CD8-positive, alpha-beta memory T cell (primary cell): ENCODE measurements at regions of chr19 and their contacts with region 1.

Region 1: DNA sequence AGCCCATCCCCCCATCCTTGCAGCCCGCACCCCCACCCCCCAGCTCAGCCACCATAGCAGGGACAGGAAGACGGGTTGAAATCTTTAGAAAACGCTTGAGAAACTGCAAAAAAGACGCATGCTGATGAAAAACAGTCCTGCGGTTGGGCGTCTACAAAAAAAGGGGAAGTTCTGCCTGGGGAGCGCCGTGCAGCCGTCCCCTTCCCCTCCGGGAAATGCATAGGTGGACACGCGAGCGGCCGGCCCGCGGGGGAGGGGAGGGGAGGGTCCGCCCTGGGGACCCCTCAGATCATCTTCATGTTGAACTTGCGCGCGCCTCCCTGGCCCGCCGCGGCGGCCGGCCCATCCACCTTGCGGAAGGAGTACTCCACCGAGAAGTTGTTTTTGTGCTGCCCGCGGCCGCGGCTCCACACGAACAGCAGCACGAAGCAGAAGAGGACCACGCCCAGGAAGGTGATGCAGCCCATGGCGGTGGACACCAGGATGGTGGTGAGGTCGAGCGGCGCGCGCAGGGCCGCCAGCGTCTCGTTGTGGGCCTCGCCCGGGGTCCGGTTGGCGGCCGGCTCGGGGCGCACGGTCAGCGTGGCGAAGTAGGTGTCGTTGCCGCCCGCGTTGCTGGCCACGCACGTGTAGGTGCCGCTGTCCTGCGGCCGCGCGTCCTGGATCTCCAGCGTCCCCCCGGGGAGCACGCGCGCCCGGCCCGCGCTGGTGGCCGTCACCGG is 7.9 kb upstream of the PEAK3 start:
- DNase-seq: peak in 3 of 5 donors; percentile 59 to 79 (median 68)
- H3K4me3 ChIP-seq: peak overlapping the region; percentile 81
- H3K4me3 Mint-ChIP-seq: peak overlapping the region; percentile 86 to 95 (median 89)
- H3K27ac ChIP-seq: peak overlapping the region; percentile 36
- H3K27ac Mint-ChIP-seq: peak overlapping the region in 6 of 8 donors; percentile 58 to 83 (median 73)
- H3K4me1 ChIP-seq: peaks cover 18% of the 10 kb centered on the region
- H3K4me1 Mint-ChIP-seq: peaks cover 16 to 41% (median 21%) of the 10 kb centered on the region in 3 donors
- H3K27me3 ChIP-seq: no peaks in the 10 kb centered on the region
- H3K27me3 Mint-ChIP-seq: peaks cover 0 to 12% of the 10 kb centered on the region in 2 donors

Region 2: GRCh38 chr19:2274931-2275535 is 14.8 kb before region 1 on chr19:
- CTCF ChIA-PET with region 1: interaction called, 33 read pairs
- POLR2A ChIA-PET with region 1: interaction called, 11 read pairs
- DNase-seq: peak in 3 of 5 donors; percentile 51 to 74 (median 53)
- H3K4me3 ChIP-seq: no peak overlapping the region
- H3K4me3 Mint-ChIP-seq: peak overlapping the region in 4 of 7 donors; percentile 31 to 64 (median 38)
- H3K27ac ChIP-seq: no peak overlapping the region
- H3K27ac Mint-ChIP-seq: peak overlapping the region in 7 of 8 donors; percentile 35 to 96 (median 76)
- H3K4me1 ChIP-seq: peaks cover 36% of the 10 kb centered on the region
- H3K4me1 Mint-ChIP-seq: peaks cover 27 to 41% (median 31%) of the 10 kb centered on the region in 3 donors
- H3K27me3 ChIP-seq: no peaks in the 10 kb centered on the region
- H3K27me3 Mint-ChIP-seq: peaks cover 0 to 4% of the 10 kb centered on the region in 2 donors

Region 3: DNA sequence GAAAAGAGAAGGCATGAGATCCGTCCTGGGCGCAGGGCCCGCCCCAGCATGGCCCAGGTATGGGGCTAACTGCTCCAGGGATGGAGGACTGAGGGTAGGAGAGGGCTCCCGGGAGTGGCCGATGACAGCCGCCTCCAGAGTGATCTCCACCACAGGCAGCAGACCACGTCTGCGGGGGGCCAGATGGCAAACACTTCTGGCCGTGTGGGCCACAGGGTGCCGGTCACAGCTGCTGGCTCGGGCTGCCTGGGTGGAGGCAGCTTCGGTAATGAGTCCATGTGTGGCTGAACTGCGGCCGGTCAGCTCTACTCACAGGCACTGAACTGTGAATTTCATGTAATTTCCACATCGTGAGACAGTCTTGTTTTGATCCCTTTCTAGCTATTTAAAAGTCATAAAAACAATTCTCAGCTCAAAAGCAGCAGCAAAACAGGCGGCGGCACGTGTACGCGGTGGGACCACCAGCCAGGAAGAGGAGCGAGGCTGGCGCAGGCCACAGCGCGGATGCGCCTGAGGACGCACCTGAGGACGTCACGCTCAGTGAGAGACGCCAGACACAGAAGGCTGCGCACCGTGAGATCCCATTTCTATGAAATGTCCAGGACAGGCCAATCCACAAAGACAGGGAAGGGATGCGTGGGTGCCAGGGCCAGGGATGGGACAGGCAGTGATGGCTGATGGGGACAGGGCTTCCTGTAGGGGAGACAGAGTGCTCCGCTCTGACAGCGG is 34.5 kb after region 1 on chr19:
- CTCF ChIA-PET with region 1: no interaction called
- POLR2A ChIA-PET with region 1: no interaction called
- DNase-seq: no peak
- H3K4me3 ChIP-seq: no peak overlapping the region
- H3K4me3 Mint-ChIP-seq: no peak overlapping the region
- H3K27ac ChIP-seq: no peak overlapping the region
- H3K27ac Mint-ChIP-seq: peak overlapping the region in 3 of 8 donors; percentile 38 to 73 (median 66)
- H3K4me1 ChIP-seq: peaks cover 20% of the 10 kb centered on the region
- H3K4me1 Mint-ChIP-seq: peaks cover 29 to 41% (median 32%) of the 10 kb centered on the region in 3 donors
- H3K27me3 ChIP-seq: no peaks in the 10 kb centered on the region
- H3K27me3 Mint-ChIP-seq: no peaks in the 10 kb centered on the region

Region 4: GRCh38 chr19:2345794-2346663 is 56.2 kb after region 1 on chr19:
- CTCF ChIA-PET with region 1: no interaction called
- POLR2A ChIA-PET with region 1: no interaction called
- DNase-seq: no peak
- H3K4me3 ChIP-seq: no peak overlapping the region
- H3K4me3 Mint-ChIP-seq: no peak overlapping the region
- H3K27ac ChIP-seq: peak overlapping the region; percentile 19
- H3K27ac Mint-ChIP-seq: no peak overlapping the region
- H3K4me1 ChIP-seq: no peaks in the 10 kb centered on the region
- H3K4me1 Mint-ChIP-seq: no peaks in the 10 kb centered on the region
- H3K27me3 ChIP-seq: no peaks in the 10 kb centered on the region
- H3K27me3 Mint-ChIP-seq: no peaks in the 10 kb centered on the region